B cell (primary cell): ENCODE measurements at regions of chr20 and their contacts with region 1.

Region 1: DNA sequence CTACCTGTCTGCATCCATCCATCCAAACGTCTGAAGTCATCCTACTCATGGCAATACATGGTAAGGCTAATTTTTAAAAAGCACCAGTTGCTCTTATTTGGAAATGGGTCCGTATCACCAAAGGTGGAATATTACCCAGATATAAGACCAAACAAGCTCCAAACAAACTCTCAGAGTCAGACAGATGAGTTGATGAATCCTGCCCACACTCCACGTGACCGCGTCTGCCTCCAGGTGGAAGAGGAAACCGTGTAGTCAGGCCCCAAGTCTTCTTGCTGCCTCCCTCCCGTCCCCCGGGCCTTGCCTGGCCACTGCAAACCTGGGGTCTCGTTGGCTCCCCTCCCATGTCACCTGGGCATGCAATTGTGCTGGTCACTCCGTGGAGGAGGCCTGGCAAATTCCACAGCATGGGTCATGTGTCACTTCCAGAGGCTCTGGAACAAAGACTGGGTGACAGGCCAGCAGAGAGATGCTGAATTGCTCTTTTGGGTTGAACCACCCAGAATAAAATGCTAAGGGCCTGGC is 31.8 kb downstream of the CTCFL start:
- DNase-seq: no peak
- ATAC-seq: no peak
- H3K4me3 ChIP-seq: no peak overlapping the region
- H3K4me3 Mint-ChIP-seq: no peak overlapping the region
- H3K27ac ChIP-seq: no peak overlapping the region
- H3K27ac Mint-ChIP-seq: no peak overlapping the region
- H3K4me1 ChIP-seq: peaks cover 11 to 18% of the 10 kb centered on the region in 2 donors
- H3K4me1 Mint-ChIP-seq: peaks cover 38% of the 10 kb centered on the region
- H3K27me3 ChIP-seq: peaks cover 0 to under 1% (median 0%) of the 10 kb centered on the region in 4 experiments
- H3K27me3 Mint-ChIP-seq: peaks cover 3% of the 10 kb centered on the region
- CTCF ChIP-seq: no peak

Region 2: GRCh38 chr20:57383447-57384347 is 109.5 kb before region 1 on chr20:
- CTCF ChIA-PET with region 1: interaction called, 56 read pairs
- POLR2A ChIA-PET with region 1: interaction called, 10 read pairs
- intact Hi-C with region 1: loop called (anchors 1 kb)
- DNase-seq: no peak
- ATAC-seq: no peak
- H3K4me3 ChIP-seq: no peak overlapping the region
- H3K4me3 Mint-ChIP-seq: no peak overlapping the region
- H3K27ac ChIP-seq: no peak overlapping the region
- H3K27ac Mint-ChIP-seq: peak overlapping the region; percentile 10
- H3K4me1 ChIP-seq: peaks cover 2 to 8% of the 10 kb centered on the region in 2 donors
- H3K4me1 Mint-ChIP-seq: peaks cover 13% of the 10 kb centered on the region
- H3K27me3 ChIP-seq: no peaks in the 10 kb centered on the region
- H3K27me3 Mint-ChIP-seq: no peaks in the 10 kb centered on the region
- CTCF ChIP-seq: no peak

Region 3: DNA sequence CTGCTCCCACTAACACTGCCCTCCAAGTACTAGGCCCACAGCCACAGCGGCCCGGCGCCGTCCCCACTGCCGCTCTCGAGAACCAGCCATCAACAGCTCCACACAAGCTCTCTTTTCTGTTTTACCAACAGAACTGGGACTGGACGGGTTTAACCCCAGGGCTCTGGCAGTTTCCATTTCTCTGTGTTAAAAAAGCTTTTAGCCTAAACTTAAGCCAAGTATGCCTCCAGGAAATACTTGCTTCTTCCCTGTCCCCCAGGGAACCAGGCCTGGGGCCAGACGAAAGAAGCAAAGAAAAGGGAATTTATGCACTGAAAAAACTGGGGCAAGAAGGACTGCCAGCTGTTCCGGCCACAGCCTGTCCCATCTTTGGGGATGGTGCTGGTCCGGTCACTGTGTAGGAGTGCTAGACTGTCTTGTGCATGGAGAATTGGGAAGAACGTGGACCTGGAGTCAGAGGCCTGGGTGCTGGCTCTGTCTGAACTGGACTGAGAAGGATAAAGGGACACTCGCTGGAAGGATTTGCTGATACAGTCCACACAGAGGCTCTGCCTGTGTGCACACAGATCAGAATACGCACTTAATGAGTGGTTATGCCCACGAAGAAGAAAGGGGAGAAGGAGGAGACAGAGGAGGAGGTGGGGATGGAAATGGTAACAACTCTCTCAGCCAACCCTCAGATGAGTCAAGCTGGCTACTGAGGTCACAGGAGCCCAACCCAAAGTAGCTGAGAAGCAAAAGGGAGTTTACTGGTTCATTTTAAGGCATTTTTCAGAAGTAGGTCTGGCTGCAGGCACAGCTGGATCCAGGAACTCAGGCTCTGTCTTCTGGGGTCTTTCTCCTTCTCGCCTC is 471.1 kb after region 1 on chr20:
- CTCF ChIA-PET with region 1: no interaction called
- POLR2A ChIA-PET with region 1: no interaction called
- intact Hi-C with region 1: no loop called
- DNase-seq: no peak
- ATAC-seq: no peak
- H3K4me3 ChIP-seq: no peak overlapping the region
- H3K4me3 Mint-ChIP-seq: no peak overlapping the region
- H3K27ac ChIP-seq: no peak overlapping the region
- H3K27ac Mint-ChIP-seq: no peak overlapping the region
- H3K4me1 ChIP-seq: no peaks in the 10 kb centered on the region
- H3K4me1 Mint-ChIP-seq: no peaks in the 10 kb centered on the region
- H3K27me3 ChIP-seq: no peaks in the 10 kb centered on the region
- H3K27me3 Mint-ChIP-seq: peaks cover 31% of the 10 kb centered on the region
- CTCF ChIP-seq: no peak